ENCODE measurements at regions of chr5 and their contacts with region 1.

Region 1: DNA sequence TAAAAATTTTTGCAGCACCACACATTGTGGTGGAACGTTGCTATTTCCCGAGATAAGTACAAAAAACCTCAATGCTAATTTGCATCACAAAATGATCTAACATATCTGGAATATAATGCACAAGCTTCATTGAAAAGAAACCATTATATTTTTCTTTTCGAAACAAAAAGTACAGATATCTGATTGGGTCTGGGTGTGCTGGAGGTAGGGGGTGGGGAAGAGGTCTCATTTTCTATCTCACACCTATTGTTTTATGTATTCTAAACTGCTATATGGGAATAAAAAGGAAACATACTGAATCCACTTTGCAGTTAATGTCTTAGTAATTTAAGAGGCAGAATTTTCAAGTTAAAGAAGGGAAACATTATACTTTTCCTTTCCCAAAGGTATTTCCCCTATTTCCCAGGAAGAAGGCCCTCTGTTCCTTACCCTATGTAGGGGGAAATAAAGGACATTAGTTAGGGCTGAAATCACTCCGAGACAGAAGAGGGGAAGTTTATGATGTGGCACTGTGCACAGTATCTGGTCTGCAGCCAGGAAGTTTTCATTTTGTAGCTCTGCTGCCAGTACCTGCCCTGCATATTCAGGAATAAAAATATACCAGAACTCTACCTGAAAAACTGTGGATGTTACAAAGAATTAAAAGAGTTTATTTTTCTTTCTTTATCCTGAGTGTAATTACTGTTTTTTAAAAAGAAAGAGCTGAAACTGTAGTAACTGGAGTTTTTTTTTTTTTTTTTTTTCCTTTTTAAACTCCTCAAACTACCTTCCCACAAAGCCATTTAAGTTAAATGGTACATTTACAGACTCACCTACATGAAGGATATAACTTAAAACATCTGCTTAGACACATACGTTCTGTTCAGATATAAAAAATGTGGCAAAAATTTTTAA is 7.4 kb downstream of the MEF2C start:
- DNase-seq: peak; percentile 49
- ATAC-seq: peak; percentile 56
- H3K4me3 ChIP-seq: peak overlapping the region; percentile 25; the same call in 1 of the 2 replicates
- H3K27ac ChIP-seq: 0 out of 2 replicates have a peak overlapping the region, but pooled peaks have one; percentile 9
- H3K4me1 ChIP-seq: peaks cover 54% of the 10 kb centered on the region
- H3K27me3 ChIP-seq: no peaks in the 10 kb centered on the region
- CTCF ChIP-seq: no peak

Region 2: DNA sequence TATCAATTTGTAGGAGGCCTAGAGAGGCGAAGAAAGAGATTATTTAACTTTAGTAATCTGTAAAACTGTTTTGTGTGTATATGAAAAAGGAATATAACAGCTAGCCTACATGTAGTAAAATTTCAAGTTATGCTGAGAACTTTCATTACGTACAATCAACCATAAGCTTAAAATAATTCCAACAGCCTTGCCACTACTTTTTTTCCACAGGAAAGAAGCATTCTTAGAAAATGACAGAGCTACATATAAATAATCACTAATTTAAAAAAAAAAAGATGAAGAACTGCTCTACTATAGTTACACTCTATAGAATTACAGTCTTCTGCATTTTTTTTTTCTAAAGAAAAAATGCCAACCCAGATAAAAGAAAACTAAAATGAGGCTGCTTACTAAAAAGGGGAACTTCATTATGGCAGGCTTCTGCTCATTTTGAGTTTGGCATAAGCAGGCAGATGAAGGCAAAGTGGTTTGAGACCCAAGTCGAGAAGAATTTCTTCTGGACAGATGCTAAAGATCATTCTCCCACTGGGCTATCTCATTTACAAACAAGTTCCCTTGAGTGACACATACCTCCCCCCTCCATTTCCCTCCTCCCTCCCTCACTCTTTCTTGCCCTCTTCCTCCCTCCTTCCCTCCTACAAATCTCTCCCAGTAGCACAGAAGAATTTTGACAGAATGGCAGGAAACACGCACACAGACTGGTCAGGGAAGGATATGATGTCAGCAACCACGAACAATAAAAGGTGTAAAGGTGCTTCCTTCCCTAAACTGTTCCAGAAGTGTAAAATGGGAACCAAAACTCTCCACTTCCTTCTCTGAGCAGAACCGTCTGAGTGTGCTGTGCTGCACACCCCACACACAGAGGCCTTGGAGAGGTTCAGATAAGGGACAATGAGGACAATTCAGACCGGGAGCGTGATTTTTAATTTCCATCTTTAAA is 48.7 kb before region 1 on chr5:
- CTCF ChIA-PET with region 1: no interaction called
- POLR2A ChIA-PET with region 1: no interaction called
- intact Hi-C with region 1: loop called (anchors 5 kb)
- DNase-seq: peak; percentile 70
- ATAC-seq: peak; percentile 72
- H3K4me3 ChIP-seq: no peak overlapping the region
- H3K27ac ChIP-seq: peak overlapping the region; percentile 76
- H3K4me1 ChIP-seq: peaks cover 30% of the 10 kb centered on the region
- H3K27me3 ChIP-seq: no peaks in the 10 kb centered on the region
- CTCF ChIP-seq: no peak

Measured in PC-3 (cell line).